HEK293T (cell line): ENCODE measurements at regions of chr15 and their contacts with region 1.

Region 1: GRCh38 chr15:34914317-34914716 is 55.2 kb downstream of the AQR start:
- DNase-seq: no peak

Region 2: DNA sequence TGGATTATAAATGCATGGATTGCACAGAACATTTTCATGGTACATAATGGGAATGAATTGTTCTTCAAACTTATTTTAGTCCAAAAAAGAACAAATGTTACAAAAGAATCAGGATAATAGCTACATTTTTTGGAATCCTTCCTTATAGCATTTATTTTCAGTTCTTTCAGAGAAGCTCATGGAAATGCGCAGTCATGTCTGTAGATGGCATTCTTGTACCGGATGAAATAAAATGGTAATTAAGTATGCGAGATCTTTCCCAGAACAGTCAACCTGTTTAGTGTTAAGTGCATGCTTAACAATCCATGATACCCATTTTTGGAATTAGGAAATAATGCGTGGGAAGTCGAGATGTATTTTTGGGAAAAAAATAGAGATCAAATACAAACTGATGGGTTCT is 292.6 kb before region 1 on chr15:
- CTCF ChIA-PET with region 1: interaction called, 10 read pairs
- POLR2A ChIA-PET with region 1: no interaction called
- DNase-seq: peak; percentile 3

Region 3: GRCh38 chr15:34890424-34890823 is 23.9 kb before region 1 on chr15:
- CTCF ChIA-PET with region 1: no interaction called
- POLR2A ChIA-PET with region 1: no interaction called
- DNase-seq: no peak